ENCODE measurements at regions of chr11 and their contacts with region 1.

Region 1: DNA sequence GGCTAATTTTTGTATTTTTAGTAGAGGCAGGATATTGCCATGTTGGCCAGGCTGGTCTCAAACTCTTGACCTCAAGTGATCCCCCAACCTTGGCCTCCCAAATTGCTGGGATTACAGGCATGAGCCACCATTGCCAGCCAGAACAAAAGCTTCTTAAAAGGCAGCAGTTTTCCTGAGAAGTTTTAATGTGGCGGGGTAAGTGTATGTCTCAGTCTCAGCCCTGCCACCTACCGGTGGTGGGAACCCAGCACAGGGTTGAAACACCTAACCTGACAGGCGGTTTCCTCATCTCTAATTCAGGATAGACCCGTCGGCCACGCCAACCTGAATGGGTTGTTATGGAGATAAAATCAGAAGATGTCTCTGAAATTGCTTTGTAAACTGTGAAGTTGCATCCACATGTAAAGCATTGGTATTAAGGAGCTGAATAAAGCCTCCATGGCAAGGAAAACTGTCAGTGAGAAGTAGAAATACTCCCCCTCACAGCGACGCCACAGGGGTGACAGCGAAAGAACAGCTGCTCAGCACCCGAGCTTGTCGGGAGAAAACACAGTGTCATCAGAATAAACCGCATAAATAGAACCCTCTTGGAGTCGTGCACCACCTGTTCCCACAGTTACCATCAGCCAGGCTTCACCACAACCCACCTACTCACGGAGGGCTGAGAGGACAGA is 165.9 kb upstream of the NCAM1 start:
- DNase-seq: peak; percentile 67
- CTCF ChIP-seq: peak; percentile 53

Region 2: DNA sequence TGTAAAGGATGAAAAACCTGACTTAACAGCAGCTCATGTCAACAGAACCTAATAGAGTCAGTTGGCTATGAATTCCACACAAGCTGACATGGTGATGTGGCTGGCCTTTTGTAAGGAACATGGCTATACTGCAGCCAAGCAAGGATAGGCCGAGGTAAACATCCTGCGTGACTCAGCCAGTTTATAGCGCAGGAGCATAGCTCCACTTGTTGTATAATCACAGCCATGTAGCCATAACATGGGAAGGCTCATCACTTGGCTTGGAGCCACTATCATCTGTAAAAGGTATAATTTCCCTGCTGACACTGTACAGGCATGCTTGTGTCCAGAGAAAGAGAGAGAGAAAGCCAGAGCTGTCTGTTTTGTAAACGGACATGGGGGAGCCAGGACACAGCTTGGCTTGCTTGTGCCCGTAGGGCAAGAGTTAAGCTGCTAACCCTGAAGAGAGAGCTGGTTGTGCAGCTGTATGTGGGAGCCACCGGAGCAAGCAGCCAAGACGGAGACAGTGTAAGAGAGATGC is 430.3 kb before region 1 on chr11:
- CTCF ChIA-PET with region 1: no interaction called
- POLR2A ChIA-PET with region 1: no interaction called
- DNase-seq: no peak
- CTCF ChIP-seq: no peak

Region 3: DNA sequence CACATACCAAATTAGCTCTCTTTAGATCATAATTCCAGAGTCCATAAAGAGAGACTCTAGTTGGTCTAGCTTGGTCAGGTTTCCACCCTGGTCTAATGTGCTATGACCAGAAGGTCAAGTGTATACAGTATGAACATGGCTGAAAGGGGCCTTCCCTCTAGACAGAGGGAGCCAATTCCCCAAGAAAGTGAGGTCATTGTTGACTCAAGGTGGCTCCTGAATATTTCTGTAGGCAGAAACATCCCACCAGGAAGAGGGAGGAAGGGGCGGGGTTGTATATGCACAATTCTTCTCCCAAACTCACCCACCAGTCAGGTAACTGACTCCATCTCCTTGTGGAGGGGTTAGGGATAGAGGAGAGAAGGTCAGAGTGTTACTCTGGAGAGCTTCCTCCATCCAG is 252.8 kb before region 1 on chr11:
- CTCF ChIA-PET with region 1: no interaction called
- POLR2A ChIA-PET with region 1: no interaction called
- DNase-seq: no peak
- CTCF ChIP-seq: no peak

Region 4: DNA sequence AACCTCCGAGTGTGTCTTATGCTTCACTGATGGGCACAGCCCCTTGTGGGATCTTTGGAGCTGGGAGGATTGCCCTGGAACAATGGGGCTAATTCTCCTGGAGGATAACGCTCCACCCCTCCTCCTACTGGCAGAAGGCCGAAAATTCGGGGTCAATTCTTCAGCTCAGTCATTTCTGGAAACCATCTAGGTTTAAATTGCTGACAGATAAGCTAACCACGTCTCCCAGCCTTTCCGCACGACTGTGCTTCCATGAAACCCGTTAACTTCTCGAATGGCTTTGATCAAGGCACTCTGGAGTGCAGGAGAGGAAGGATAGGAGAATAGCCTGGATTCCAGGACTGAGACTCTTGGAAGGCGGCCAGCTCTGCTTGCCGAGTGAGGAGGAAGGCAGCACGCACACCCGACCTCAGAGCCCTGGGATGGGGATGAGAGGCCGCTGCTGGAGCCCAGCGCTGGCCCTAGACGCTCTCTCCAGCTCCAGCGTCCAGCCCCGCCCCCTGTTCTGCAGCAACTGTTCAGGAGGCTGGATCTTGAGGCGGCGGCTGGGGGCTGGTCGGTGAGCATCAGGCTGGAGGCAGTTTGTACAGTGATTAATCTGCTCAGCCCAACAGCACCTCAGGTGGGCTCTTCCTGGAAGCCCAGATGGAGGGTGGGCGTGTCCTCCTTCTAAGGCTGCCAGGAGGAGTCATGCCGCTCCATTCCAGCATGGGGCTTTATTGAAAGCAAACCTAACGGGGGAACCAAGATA is 10.8 kb before region 1 on chr11:
- CTCF ChIA-PET with region 1: interaction called, 10 read pairs
- POLR2A ChIA-PET with region 1: no interaction called
- DNase-seq: no peak
- CTCF ChIP-seq: no peak

Region 5: DNA sequence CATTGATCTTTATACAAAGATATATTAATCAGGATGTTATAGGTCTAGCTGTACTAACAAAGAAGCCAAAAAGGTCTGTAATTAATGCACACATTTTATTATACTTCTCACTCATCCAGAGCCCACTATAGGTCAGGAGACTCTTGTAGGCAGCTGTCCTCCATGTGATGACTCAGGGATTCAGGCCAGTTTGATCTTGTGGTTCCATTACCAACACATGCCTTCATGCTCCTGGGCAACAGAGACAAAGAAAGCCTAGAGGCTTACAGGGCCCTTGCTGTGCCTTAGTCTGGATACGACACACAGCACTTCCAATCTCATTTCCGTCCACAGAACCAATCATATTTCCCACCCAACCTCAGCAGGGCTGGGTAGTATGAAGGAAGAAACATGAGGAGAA is 15.7 kb after region 1 on chr11:
- CTCF ChIA-PET with region 1: interaction called, 10 read pairs
- POLR2A ChIA-PET with region 1: no interaction called
- DNase-seq: no peak
- CTCF ChIP-seq: no peak

Region 6: GRCh38 chr11:112864672-112865071 is 69.4 kb after region 1 on chr11:
- CTCF ChIA-PET with region 1: no interaction called
- POLR2A ChIA-PET with region 1: no interaction called
- DNase-seq: no peak
- CTCF ChIP-seq: no peak